CD4-positive, alpha-beta T cell (primary cell): ENCODE measurements at regions of chr10 and their contacts with region 1.

Region 1: GRCh38 chr10:26725837-26726727 is 28.6 kb downstream of the PDSS1 start:
- DNase-seq: peak; percentile 16 to 79 (median 38)
- ATAC-seq: peak; percentile 59
- H3K4me3 ChIP-seq: no peak overlapping the region
- H3K4me3 Mint-ChIP-seq: no peak overlapping the region
- H3K27ac ChIP-seq: no peak overlapping the region
- H3K27ac Mint-ChIP-seq: no peak overlapping the region
- H3K4me1 ChIP-seq: peaks cover 7% of the 10 kb centered on the region
- H3K4me1 Mint-ChIP-seq: peaks cover 9% of the 10 kb centered on the region
- H3K27me3 ChIP-seq: no peaks in the 10 kb centered on the region
- H3K27me3 Mint-ChIP-seq: no peaks in the 10 kb centered on the region
- CTCF ChIP-seq: peak; percentile 93

Region 2: DNA sequence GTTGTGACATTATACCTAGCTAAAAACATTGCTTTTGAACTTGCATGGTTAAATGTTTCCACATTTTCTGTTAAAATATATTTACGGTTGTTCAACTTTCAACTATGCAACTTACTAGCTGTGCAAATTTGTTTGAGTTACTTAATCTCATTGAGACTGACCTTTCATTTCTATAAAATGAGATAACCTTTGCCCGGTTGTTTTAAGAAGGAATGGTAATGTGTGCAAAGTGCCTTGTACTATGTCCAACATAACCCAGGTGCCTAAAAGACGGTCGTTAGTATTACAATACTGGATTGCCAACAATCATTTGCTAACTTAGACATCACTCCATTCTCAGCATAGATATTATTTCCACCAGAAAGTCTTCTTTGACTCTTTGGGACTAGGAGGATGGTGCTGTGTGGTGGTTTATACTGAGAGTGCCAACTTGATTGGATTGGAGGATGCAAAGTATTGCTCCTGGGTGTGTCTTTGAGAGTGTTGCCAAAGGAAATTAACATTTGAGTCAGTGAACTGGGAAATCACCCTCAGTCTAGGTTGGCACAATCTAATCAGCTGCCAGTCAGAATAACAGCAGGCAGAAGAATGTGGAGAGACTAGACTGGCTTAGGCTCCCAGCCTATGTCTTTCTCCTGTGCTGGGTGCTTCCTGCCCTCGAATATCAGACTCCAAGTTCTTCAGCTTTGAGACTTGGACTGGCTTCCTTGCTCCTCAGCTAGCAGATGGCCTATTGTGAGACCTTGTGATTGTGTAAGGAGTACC is 113.7 kb before region 1 on chr10:
- CTCF ChIA-PET with region 1: no interaction called
- POLR2A ChIA-PET with region 1: no interaction called
- intact Hi-C with region 1: loop called in 1 of 2 experiments (anchors 10 kb)
- DNase-seq: no peak
- ATAC-seq: no peak
- H3K4me3 ChIP-seq: no peak overlapping the region
- H3K4me3 Mint-ChIP-seq: no peak overlapping the region
- H3K27ac ChIP-seq: no peak overlapping the region
- H3K27ac Mint-ChIP-seq: no peak overlapping the region
- H3K4me1 ChIP-seq: no peaks in the 10 kb centered on the region
- H3K4me1 Mint-ChIP-seq: no peaks in the 10 kb centered on the region
- H3K27me3 ChIP-seq: no peaks in the 10 kb centered on the region
- H3K27me3 Mint-ChIP-seq: no peaks in the 10 kb centered on the region
- CTCF ChIP-seq: no peak

Region 3: DNA sequence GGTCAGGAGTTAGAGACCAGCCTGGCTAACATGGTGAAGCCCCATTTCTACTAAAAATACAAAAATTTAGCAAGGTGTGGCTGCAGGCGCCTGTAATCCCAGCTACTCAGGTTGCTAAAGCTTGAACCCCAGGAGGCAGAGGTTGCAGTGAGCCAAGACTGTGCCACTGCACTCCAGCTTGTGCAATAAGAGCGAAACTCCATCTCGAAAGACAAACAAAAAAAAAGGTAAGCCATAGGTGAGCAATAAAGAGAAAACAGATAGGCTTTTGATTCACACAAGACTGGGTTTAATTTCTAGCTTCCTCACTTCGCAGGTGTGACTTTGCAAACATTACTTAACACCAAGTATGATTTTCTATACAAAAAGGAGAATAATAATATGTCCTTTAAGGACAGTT is 586.8 kb after region 1 on chr10:
- CTCF ChIA-PET with region 1: no interaction called
- POLR2A ChIA-PET with region 1: no interaction called
- intact Hi-C with region 1: no loop called
- DNase-seq: no peak
- ATAC-seq: no peak
- H3K4me3 ChIP-seq: no peak overlapping the region
- H3K4me3 Mint-ChIP-seq: no peak overlapping the region
- H3K27ac ChIP-seq: no peak overlapping the region
- H3K27ac Mint-ChIP-seq: no peak overlapping the region
- H3K4me1 ChIP-seq: no peaks in the 10 kb centered on the region
- H3K4me1 Mint-ChIP-seq: no peaks in the 10 kb centered on the region
- H3K27me3 ChIP-seq: no peaks in the 10 kb centered on the region
- H3K27me3 Mint-ChIP-seq: peaks cover 18% of the 10 kb centered on the region
- CTCF ChIP-seq: no peak